GM12878 (cell line): ENCODE measurements at regions of chr5 and their contacts with region 1.

Region 1: GRCh38 chr5:76608833-76609232 is 14.4 kb downstream of the F2RL2 start:
- DNase-seq: no peak
- ATAC-seq: peak; percentile 59
- H3K4me3 ChIP-seq: no peak overlapping the region
- H3K27ac ChIP-seq: no peak overlapping the region
- H3K4me1 ChIP-seq: no peaks in the 10 kb centered on the region
- H3K27me3 ChIP-seq: no peaks in the 10 kb centered on the region
- CTCF ChIP-seq: no peak
- EP300 ChIP-seq: peak in 1 of 2 experiments; percentile 23; a peak in 1 of 4 replicates
- POLR2A ChIP-seq: no peak
- RAD21 ChIP-seq: no peak

Region 2: DNA sequence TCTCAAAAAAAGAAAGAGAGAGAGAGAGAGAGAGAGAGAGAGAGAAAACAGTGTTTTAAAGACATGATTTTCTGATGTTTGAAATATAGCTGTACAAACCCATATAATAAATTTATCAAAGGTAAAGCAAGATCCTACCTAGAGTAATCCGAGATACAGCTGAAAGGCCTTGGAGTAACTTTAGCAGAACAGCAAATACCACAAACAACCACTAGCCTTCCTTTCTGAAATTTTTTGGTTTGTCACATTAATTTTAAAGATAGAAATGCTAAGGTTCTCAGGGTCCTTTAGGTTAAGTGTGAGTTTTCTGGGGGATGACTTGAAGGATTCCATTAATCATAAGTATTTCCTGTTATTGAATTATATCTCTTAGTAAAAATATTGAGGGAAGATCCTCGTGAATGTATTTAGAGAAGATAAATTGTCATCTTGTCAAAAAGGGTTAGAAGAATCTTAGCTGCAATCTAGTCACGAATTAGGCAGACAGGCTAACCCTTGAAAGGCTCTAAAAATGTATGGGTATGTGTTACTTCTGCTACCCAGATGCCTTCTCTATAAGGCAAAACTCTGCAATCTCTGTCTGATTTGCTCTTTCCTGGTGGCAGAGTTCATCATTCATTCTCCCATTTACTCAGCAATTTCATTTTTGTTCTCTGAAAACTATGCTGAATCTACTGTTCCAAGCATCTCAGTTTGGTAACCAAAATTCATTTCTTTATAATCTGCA is 12.9 kb before region 1 on chr5:
- CTCF ChIA-PET with region 1: interaction called, 22 read pairs
- POLR2A ChIA-PET with region 1: interaction called, 3 read pairs
- RAD21 ChIA-PET with region 1: interaction called, 3 read pairs
- SMC1A ChIA-PET with region 1: interaction called, 12 read pairs
- in situ Hi-C with region 1: no loop called
- intact Hi-C with region 1: no loop called
- DNase-seq: no peak
- ATAC-seq: no peak
- H3K4me3 ChIP-seq: no peak overlapping the region
- H3K27ac ChIP-seq: no peak overlapping the region
- H3K4me1 ChIP-seq: no peaks in the 10 kb centered on the region
- H3K27me3 ChIP-seq: no peaks in the 10 kb centered on the region
- CTCF ChIP-seq: no peak
- EP300 ChIP-seq: no peak
- POLR2A ChIP-seq: no peak
- RAD21 ChIP-seq: no peak

Region 3: DNA sequence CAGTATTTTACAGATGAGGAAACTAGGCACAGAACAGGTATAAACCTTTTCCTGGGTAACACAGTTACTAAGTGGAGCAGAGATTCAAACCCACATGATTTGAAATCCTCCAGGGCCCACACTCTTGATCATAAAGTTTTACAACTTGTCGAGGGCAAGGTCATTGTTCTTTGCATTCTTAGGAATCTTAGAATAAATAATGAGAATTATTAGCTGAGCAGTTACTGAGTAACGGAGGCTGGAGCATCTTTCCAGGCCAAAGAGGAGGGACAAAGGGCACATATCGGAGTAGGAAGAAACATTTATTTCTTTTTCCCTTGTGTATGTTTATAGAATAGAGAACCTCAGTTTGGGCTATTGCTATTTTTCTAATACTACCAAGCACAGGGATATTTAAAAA is 80.0 kb after region 1 on chr5:
- CTCF ChIA-PET with region 1: no interaction called
- POLR2A ChIA-PET with region 1: no interaction called
- RAD21 ChIA-PET with region 1: no interaction called
- SMC1A ChIA-PET with region 1: no interaction called
- in situ Hi-C with region 1: no loop called
- intact Hi-C with region 1: no loop called
- DNase-seq: no peak
- ATAC-seq: no peak
- H3K4me3 ChIP-seq: no peak overlapping the region
- H3K27ac ChIP-seq: no peak overlapping the region
- H3K4me1 ChIP-seq: peaks cover 10% of the 10 kb centered on the region
- H3K27me3 ChIP-seq: no peaks in the 10 kb centered on the region
- CTCF ChIP-seq: no peak
- EP300 ChIP-seq: no peak
- POLR2A ChIP-seq: no peak
- RAD21 ChIP-seq: no peak

Region 4: GRCh38 chr5:76960004-76960625 is 351.3 kb after region 1 on chr5:
- CTCF ChIA-PET with region 1: no interaction called
- POLR2A ChIA-PET with region 1: no interaction called
- RAD21 ChIA-PET with region 1: no interaction called
- SMC1A ChIA-PET with region 1: no interaction called
- in situ Hi-C with region 1: no loop called
- intact Hi-C with region 1: no loop called
- DNase-seq: no peak
- ATAC-seq: peak; percentile 97
- H3K4me3 ChIP-seq: no peak overlapping the region
- H3K27ac ChIP-seq: no peak overlapping the region
- H3K4me1 ChIP-seq: peaks cover 13% of the 10 kb centered on the region
- H3K27me3 ChIP-seq: no peaks in the 10 kb centered on the region; a peak in 2 of 4 replicates
- CTCF ChIP-seq: no peak
- EP300 ChIP-seq: no peak
- POLR2A ChIP-seq: no peak
- RAD21 ChIP-seq: no peak